Cardiac septum (tissue), 1 donor: ENCODE measurements at regions of chr15 and their contacts with region 1.

Region 1: DNA sequence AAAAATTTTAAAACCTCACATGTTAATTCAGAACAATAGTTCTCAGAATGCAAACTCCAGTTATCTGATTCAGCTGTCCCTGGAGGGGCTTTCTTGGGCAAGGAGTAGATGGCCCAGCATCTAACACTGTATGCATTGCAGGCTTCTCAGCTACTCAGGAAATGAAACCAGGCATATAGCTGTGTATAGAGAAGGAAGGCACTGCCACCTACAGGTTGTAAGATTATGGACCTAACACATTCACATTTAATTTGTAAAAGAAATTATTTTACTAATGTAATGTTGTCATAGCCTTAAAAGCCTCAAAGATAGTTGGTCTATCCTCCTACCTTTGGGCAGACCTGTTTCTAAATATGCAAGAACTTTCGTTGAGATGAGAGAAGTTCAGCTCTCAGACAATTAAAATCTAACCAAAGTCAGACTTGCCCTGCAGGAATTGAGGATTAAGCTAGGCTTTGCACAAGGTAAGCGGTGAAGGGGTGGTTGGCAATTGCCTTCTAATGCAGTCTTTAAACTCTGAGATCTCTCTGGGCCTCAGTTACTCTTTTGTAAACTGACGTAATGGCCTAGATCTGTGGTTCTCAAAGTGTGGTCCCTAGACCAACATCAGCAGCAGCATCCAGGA is 132.8 kb upstream of the SLC24A5 start:
- DNase-seq: no peak

Region 2: GRCh38 chr15:47473832-47474231 is 514.2 kb before region 1 on chr15:
- intact Hi-C with region 1: loop called (anchors 2 kb)
- DNase-seq: peak; percentile 76

Region 3: DNA sequence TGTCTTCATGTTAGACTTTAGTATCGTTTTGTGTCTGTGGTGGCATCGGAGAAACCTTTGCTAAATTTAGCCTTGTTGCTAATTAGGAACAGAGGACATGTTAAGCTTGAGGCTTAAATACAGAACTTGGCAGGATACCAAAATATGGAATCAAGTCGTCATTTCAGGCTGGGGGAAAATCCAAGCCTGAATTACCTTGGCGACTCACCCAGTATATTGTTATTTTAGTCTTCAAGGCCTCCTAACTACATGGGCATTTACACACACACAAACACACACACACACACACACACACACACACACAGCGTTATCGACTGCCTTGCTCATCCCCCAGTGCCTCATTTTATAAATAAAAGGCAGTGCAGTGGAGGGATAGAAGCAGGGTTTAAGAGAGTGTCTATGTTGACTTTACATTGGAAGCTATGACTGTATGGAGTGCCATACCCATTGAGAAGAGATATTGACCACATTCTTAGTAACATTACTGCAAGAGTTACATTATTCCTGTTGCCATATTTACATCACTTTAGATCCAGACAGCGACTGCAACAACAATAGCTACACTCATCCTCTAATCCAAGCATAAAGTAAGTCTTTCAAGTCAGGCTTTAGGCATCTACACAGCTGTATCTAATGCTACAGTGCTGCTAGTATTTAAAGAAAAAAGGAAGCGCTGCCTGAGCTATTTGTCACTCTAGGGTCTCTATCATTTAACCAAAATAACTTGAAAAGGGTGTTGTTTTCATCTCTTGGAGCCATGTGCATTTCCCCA is 481.5 kb before region 1 on chr15:
- intact Hi-C with region 1: loop called (anchors 5 kb)
- DNase-seq: no peak

Region 4: DNA sequence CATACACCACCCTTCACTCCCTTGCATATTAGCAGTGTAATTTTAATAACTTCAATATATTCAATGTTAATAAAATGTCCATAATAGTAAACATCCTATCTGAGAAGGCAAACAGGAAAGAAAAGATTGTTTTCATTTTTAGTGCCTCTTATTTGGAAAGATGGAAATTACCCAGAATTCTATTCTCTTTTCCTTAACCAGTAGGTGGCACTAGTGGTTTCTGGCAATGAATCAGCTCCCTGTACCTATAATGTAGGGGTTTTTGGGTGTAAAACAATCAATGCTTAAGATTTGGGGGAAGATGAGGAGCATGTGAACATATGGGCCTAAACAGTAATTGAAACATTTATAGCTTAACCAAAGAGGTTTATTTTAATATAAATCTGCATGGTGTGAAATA is 276.4 kb before region 1 on chr15:
- intact Hi-C with region 1: loop called (anchors 5 kb)
- DNase-seq: no peak